CD4-positive, alpha-beta memory T cell (primary cell): ENCODE measurements at regions of chr1 and their contacts with region 1.

Region 1: GRCh38 chr1:205658943-205659581 is 21.2 kb downstream of the SLC45A3 start:
- DNase-seq: peak; percentile 58 to 65 (median 63)
- H3K4me3 ChIP-seq: no peak overlapping the region
- H3K4me3 Mint-ChIP-seq: no peak overlapping the region
- H3K27ac ChIP-seq: no peak overlapping the region
- H3K27ac Mint-ChIP-seq: peak overlapping the region in 2 of 7 donors; percentile 41 to 71
- H3K4me1 ChIP-seq: no peaks in the 10 kb centered on the region
- H3K4me1 Mint-ChIP-seq: peaks cover 0 to 4% (median 2%) of the 10 kb centered on the region in 4 donors
- H3K27me3 ChIP-seq: no peaks in the 10 kb centered on the region
- H3K27me3 Mint-ChIP-seq: peaks cover 0 to 1% of the 10 kb centered on the region in 2 donors

Region 2: GRCh38 chr1:205523891-205524793 is 134.9 kb before region 1 on chr1:
- CTCF ChIA-PET with region 1: interaction called, 83 read pairs
- POLR2A ChIA-PET with region 1: no interaction called
- intact Hi-C with region 1: loop called (anchors 1 kb)
- DNase-seq: peak in 4 of 5 donors; percentile 61 to 64 (median 63)
- H3K4me3 ChIP-seq: no peak overlapping the region
- H3K4me3 Mint-ChIP-seq: no peak overlapping the region
- H3K27ac ChIP-seq: no peak overlapping the region
- H3K27ac Mint-ChIP-seq: no peak overlapping the region
- H3K4me1 ChIP-seq: no peaks in the 10 kb centered on the region
- H3K4me1 Mint-ChIP-seq: no peaks in the 10 kb centered on the region
- H3K27me3 ChIP-seq: no peaks in the 10 kb centered on the region
- H3K27me3 Mint-ChIP-seq: peaks cover 0 to 3% of the 10 kb centered on the region in 2 donors

Region 3: DNA sequence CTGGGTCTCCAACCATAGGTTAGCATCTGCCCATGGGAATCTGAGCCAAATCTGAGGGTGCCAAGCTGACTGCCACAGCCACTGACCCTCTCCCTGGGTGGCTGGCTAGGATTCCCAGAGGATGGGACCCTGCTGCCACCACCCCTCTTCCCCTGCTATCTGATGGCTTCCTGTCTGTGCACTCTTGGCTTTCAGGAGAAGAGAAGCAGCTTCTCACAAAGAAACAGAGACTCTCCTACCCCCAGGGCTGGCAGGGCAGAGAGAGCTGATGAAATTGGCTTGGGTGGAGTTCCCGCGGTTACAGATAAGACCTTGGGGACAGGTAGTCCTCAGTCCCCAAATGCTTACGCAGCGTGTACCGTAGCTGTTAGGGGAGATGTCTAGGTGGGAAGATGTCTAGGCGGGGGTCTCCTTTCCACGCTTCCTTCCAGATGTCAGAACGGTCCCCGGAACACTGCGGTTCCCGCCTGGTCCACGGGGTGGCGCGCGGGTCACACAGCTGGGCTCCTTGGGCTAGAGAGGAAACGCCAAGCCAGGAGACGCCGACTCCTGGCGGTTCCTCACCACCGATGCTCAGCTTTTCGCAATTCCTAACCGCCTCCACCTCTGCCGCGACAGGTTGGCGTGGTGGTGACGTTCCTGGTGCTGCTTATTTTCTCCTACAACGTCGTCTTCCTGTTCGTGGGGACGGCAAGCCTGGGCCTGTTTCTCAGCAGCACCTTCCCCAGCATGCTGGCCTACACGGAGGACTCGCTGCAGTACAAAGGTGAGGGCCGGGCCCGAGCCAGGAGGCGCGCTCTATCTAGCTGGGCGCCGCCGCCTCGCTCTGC is 67.3 kb before region 1 on chr1:
- CTCF ChIA-PET with region 1: interaction called, 484 read pairs
- POLR2A ChIA-PET with region 1: interaction called, 47 read pairs
- intact Hi-C with region 1: loop called (anchors 1 kb)
- DNase-seq: peak; percentile 85 to 89 (median 86)
- H3K4me3 ChIP-seq: peak overlapping the region in 1 of 2 donors; percentile 61
- H3K4me3 Mint-ChIP-seq: peak overlapping the region; percentile 87 to 93 (median 90)
- H3K27ac ChIP-seq: peak overlapping the region; percentile 52
- H3K27ac Mint-ChIP-seq: peak overlapping the region; percentile 82 to 96 (median 89)
- H3K4me1 ChIP-seq: peaks cover 21% of the 10 kb centered on the region
- H3K4me1 Mint-ChIP-seq: peaks cover 17 to 34% (median 25%) of the 10 kb centered on the region in 4 donors
- H3K27me3 ChIP-seq: no peaks in the 10 kb centered on the region
- H3K27me3 Mint-ChIP-seq: no peaks in the 10 kb centered on the region

Region 4: GRCh38 chr1:205637854-205638468 is 21.1 kb before region 1 on chr1:
- CTCF ChIA-PET with region 1: interaction called, 31 read pairs
- POLR2A ChIA-PET with region 1: interaction called, 30 read pairs
- intact Hi-C with region 1: no loop called
- DNase-seq: no peak
- H3K4me3 ChIP-seq: no peak overlapping the region
- H3K4me3 Mint-ChIP-seq: no peak overlapping the region
- H3K27ac ChIP-seq: no peak overlapping the region
- H3K27ac Mint-ChIP-seq: no peak overlapping the region
- H3K4me1 ChIP-seq: peaks cover 1% of the 10 kb centered on the region
- H3K4me1 Mint-ChIP-seq: peaks cover 0 to 2% (median under 1%) of the 10 kb centered on the region in 4 donors
- H3K27me3 ChIP-seq: no peaks in the 10 kb centered on the region
- H3K27me3 Mint-ChIP-seq: peaks cover 7 to 11% of the 10 kb centered on the region in 2 donors

Region 5: DNA sequence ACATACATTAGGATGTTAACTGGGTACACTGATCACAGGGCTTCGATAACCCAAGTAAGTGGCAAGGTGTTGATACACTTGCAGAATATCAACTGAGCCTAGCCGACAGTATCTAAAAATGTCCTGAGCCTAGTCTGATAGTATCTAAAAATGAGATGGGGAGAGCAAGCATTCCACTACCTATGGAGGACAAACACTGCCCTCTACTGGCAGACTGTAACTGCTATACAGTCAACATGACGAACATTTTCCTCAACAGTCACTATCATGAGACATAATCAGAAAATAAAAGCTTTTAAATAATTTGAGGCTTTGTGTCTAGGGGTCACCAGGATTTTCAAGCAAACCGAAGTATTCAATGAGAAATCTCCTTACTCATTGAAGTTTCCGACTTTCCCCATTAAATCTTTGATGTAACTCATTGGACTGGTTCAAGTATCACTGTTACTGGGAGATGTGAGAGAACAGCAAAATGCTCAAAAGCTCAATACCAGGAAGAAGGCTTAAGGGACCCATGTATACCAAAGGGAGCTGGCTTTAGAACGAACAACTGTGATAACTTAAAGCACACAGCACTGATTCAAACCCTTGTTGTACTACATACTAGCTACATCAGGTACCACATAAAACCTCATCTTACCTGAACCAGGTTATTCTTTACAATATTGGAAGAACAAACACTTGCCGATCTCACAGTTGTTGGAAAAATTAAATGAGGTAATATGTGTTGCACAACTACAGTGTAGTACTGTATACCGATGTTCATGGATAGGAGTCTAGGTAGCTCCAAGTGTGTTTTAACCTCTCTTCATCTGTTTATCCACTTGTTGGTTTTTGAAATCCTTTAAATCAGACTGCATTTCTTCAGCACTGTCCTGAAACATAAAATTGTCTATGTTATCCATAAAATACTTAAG is 52.3 kb after region 1 on chr1:
- CTCF ChIA-PET with region 1: interaction called, 138 read pairs
- POLR2A ChIA-PET with region 1: interaction called, 5 read pairs
- intact Hi-C with region 1: loop called (anchors 1 kb)
- DNase-seq: peak; percentile 54 to 67 (median 62)
- H3K4me3 ChIP-seq: no peak overlapping the region
- H3K4me3 Mint-ChIP-seq: no peak overlapping the region
- H3K27ac ChIP-seq: no peak overlapping the region
- H3K27ac Mint-ChIP-seq: peak overlapping the region in 4 of 7 donors; percentile 25 to 68 (median 56)
- H3K4me1 ChIP-seq: peaks cover 3% of the 10 kb centered on the region
- H3K4me1 Mint-ChIP-seq: peaks cover 5 to 14% (median 11%) of the 10 kb centered on the region in 4 donors
- H3K27me3 ChIP-seq: no peaks in the 10 kb centered on the region
- H3K27me3 Mint-ChIP-seq: no peaks in the 10 kb centered on the region

Region 6: GRCh38 chr1:205783904-205784303 is 124.8 kb after region 1 on chr1:
- CTCF ChIA-PET with region 1: interaction called, 33 read pairs
- POLR2A ChIA-PET with region 1: no interaction called
- intact Hi-C with region 1: loop called (anchors 1 kb)
- DNase-seq: no peak
- H3K4me3 ChIP-seq: no peak overlapping the region
- H3K4me3 Mint-ChIP-seq: no peak overlapping the region
- H3K27ac ChIP-seq: no peak overlapping the region
- H3K27ac Mint-ChIP-seq: peak overlapping the region in 1 of 7 donors; percentile 22
- H3K4me1 ChIP-seq: peaks cover 8% of the 10 kb centered on the region
- H3K4me1 Mint-ChIP-seq: peaks cover 7 to 12% (median 10%) of the 10 kb centered on the region in 4 donors
- H3K27me3 ChIP-seq: no peaks in the 10 kb centered on the region
- H3K27me3 Mint-ChIP-seq: no peaks in the 10 kb centered on the region

Region 7: GRCh38 chr1:205977402-205978014 is 318.4 kb after region 1 on chr1:
- CTCF ChIA-PET with region 1: interaction called, 111 read pairs
- POLR2A ChIA-PET with region 1: no interaction called
- intact Hi-C with region 1: no loop called
- DNase-seq: peak; percentile 63 to 70 (median 69)
- H3K4me3 ChIP-seq: no peak overlapping the region
- H3K4me3 Mint-ChIP-seq: no peak overlapping the region
- H3K27ac ChIP-seq: no peak overlapping the region
- H3K27ac Mint-ChIP-seq: peak overlapping the region in 1 of 7 donors; percentile 5
- H3K4me1 ChIP-seq: no peaks in the 10 kb centered on the region
- H3K4me1 Mint-ChIP-seq: peaks cover 0 to 6% (median under 1%) of the 10 kb centered on the region in 4 donors
- H3K27me3 ChIP-seq: no peaks in the 10 kb centered on the region
- H3K27me3 Mint-ChIP-seq: peaks cover 4 to 7% of the 10 kb centered on the region in 2 donors